HepG2 (cell line): ENCODE measurements at regions of chr3 and their contacts with region 1.

Region 1: GRCh38 chr3:141412087-141412935 is 44.0 kb downstream of the ZBTB38 start:
- DNase-seq: peak; percentile 49
- ATAC-seq: 0 out of 3 replicates have a peak, but pooled peaks have one; percentile 19
- H3K4me3 ChIP-seq: peak overlapping the region in 2 of 3 experiments; percentile 34 to 54; a peak in 3 of 6 replicates
- H3K27ac ChIP-seq: peak overlapping the region; percentile 91
- H3K4me1 ChIP-seq: peaks cover 67% of the 10 kb centered on the region
- H3K27me3 ChIP-seq: no peaks in the 10 kb centered on the region
- CTCF ChIP-seq: no peak
- EP300 ChIP-seq: no peak
- POLR2A ChIP-seq: no peak; a peak in 2 of 4 replicates
- RAD21 ChIP-seq: no peak

Region 2: GRCh38 chr3:141311496-141312353 is 100.6 kb before region 1 on chr3:
- CTCF ChIA-PET with region 1: no interaction called
- POLR2A ChIA-PET with region 1: interaction called, 8 read pairs
- in situ Hi-C with region 1: no loop called
- intact Hi-C with region 1: loop called (anchors 1 kb)
- DNase-seq: peak; percentile 96
- ATAC-seq: peak; percentile 92
- H3K4me3 ChIP-seq: peak overlapping the region; percentile 65 to 84 (median 83)
- H3K27ac ChIP-seq: peak overlapping the region; percentile 34
- H3K4me1 ChIP-seq: peaks cover 28% of the 10 kb centered on the region
- H3K27me3 ChIP-seq: no peaks in the 10 kb centered on the region
- CTCF ChIP-seq: peak; percentile 97
- EP300 ChIP-seq: peak in 1 of 2 experiments; percentile 45; a peak in 1 of 4 replicates
- POLR2A ChIP-seq: peak; percentile 71 to 95
- RAD21 ChIP-seq: peak; percentile 93

Region 3: GRCh38 chr3:141370065-141370533 is 42.2 kb before region 1 on chr3:
- CTCF ChIA-PET with region 1: no interaction called
- POLR2A ChIA-PET with region 1: interaction called, 19 read pairs
- in situ Hi-C with region 1: no loop called
- intact Hi-C with region 1: no loop called
- DNase-seq: peak; percentile 94
- ATAC-seq: peak; percentile 76
- H3K4me3 ChIP-seq: peak overlapping the region in 2 of 3 experiments; percentile 50 to 73; a peak in 2 of 6 replicates
- H3K27ac ChIP-seq: peak overlapping the region; percentile 98
- H3K4me1 ChIP-seq: peaks cover 79% of the 10 kb centered on the region
- H3K27me3 ChIP-seq: no peaks in the 10 kb centered on the region
- CTCF ChIP-seq: peak; percentile 66
- EP300 ChIP-seq: peak in 1 of 2 experiments; percentile 28; a peak in 2 of 4 replicates
- POLR2A ChIP-seq: peak in 1 of 2 experiments; percentile 46; a peak in 2 of 4 replicates
- RAD21 ChIP-seq: peak; percentile 45; the same call in 1 of the 2 replicates

Region 4: DNA sequence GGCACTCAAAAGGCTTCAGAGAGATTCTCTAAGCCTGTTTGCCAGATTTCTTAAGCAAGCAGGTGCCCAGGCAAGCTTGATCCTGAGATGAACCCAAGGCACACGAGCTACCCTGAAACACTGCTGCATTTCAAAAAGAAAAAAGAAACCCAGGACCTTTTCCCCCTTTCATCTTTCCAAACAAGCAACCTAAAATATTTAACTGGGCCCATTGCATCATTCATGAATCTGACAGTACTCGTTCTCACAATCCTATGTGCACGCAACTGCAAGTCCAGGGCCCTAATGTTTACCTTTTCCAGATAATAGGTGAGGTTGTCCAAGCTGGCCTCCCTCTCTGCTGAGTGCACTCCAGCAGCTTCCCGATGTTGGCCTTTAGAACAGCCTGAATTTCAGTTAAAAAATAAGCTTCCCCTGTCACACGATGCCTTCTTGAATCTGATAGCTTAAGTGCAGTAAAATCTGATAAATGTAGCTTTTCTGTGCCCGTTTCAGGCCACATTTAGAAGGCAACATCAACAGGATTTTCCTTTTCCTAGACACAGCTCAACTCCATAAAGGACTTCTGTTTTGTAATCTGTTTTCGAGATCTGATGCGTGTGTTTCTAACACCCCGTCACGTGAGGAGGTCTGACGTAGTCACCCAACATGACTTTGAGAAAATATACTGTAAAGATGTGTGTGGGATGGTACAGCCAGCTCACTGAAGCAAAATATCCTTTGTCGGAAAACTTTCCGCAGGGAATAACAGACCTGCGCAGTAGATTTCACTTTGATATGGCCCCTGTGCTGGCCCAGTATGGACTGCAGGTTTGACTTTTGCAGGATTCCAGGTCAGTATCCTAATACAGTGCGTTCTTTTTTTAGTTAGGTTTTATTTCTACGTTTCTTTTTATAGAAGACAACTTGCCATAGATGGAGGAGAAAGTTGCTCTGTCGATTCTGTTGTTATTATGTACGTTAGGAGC is 19.4 kb after region 1 on chr3:
- CTCF ChIA-PET with region 1: no interaction called
- POLR2A ChIA-PET with region 1: interaction called, 128 read pairs
- in situ Hi-C with region 1: no loop called
- intact Hi-C with region 1: loop called (anchors 2 kb)
- DNase-seq: peak; percentile 95
- ATAC-seq: peak; percentile 96
- H3K4me3 ChIP-seq: peak overlapping the region; percentile 46 to 58 (median 58)
- H3K27ac ChIP-seq: peak overlapping the region; percentile 95
- H3K4me1 ChIP-seq: peaks cover 54% of the 10 kb centered on the region
- H3K27me3 ChIP-seq: no peaks in the 10 kb centered on the region
- CTCF ChIP-seq: no peak
- EP300 ChIP-seq: peak; percentile 69 to 91; a peak in 3 of 4 replicates
- POLR2A ChIP-seq: peak in 1 of 2 experiments; percentile 61; a peak in 2 of 4 replicates
- RAD21 ChIP-seq: no peak